HEK293 (cell line): ENCODE measurements at regions of chr11 and their contacts with region 1.

Region 1: GRCh38 chr11:41461057-41461681 is 1.7 kb upstream of the LRRC4C start:
- H3K4me3 ChIP-seq: no peak overlapping the region
- H3K27ac ChIP-seq: no peak overlapping the region
- H3K4me1 ChIP-seq: no peaks in the 10 kb centered on the region
- CTCF ChIP-seq: no peak

Region 2: DNA sequence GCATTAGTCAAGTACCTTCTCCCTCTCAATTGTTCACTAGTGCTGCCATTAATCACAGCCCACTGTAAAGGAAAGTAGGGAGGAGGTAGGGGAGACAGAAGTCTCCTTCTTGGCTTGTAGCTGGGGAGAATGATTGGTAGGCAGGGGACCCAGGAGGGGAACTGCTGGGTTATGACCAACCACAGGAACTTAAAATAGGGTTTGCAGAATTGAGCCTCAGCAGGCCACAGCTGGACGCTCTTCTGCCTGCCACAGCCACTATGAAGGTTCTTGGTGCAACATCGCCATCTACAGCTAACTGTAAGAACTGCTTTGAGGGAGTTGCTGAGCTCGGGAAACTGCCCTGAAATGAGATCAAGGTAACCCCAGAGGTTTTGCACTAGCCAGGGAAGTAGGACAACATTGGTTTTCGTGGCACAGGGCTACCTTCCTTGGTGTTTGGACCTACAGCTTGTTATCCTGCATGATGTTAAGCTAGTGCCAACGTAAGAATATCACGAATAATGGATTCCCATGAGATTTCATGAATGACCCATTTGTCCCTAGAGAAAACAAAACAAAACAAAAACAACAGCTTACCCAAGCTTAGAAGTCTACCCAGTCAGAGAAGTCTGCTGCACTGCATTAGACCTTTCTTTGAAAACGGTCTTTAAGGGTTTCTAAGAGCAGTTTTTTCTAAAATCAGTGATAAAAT is 1063.5 kb after region 1 on chr11:
- CTCF ChIA-PET with region 1: interaction called, 15 read pairs
- POLR2A ChIA-PET with region 1: no interaction called
- H3K4me3 ChIP-seq: no peak overlapping the region
- H3K27ac ChIP-seq: no peak overlapping the region
- H3K4me1 ChIP-seq: no peaks in the 10 kb centered on the region
- CTCF ChIP-seq: peak; percentile 28; the same call in 1 of the 2 replicates